Activated naive CD4-positive, alpha-beta T cell treated with anti-CD3 and anti-CD28 coated beads for 36 hours (primary cell): ENCODE measurements at regions of chrX and their contacts with region 1.

Region 1: DNA sequence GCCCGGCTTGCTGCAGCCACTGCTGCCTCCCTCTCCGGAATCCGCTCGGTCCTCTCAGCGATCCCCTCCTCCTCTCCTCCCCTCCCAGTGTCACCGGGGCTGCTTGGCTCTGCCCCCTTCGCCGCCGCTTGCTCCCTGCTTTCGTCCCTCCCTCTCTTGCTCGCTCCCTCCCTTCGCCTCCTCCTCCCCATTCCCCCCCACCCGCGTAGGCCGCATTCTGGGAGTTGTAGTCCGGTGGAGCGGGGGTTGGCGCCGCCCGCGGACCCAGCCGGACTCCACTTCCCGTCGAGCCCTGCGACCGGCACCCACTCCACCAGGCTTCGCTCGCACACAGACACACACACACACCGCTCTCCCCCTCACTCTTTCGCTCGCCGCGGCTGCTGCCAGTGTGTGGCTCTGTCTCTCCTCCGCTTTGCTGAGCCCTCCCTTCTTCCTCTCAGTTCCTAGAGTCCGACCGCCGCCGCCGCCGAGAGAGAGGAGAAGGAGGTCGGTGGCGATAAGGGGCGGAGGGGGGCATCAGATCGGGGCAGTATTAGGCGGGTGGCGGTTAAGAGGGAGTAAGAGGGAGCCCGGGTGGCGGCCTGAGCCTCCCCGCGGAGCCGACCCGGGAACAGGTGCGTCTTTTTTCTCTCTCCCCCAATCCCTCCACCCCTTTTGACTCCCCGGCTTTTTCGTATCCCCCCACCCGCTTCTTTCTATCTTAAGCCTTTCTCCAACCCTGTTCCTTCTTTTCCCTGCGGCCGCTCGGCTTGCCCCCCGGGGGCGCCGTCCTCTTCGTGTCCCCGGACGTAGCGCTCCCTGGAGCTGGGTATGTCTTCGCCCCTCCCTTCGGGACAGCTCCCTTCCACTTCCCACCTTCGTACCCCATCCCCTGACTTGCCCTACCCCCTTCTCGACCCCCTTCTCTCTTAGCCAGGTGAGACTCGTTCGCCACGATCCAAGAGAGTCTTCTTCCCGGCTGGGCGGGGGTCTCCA is at the start of gene BCORL1:
- DNase-seq: peak; percentile 90
- H3K4me3 Mint-ChIP-seq: no peak within 1 kb of the TSS
- H3K27ac Mint-ChIP-seq: no peak within 1 kb of the TSS
- H3K4me1 Mint-ChIP-seq: peaks cover 16% of the 10 kb centered on the region
- H3K27me3 Mint-ChIP-seq: no peaks in the 10 kb centered on the region
- total RNA-seq, gene BCORL1: 3.6 to 4.1 TPM

Region 2: DNA sequence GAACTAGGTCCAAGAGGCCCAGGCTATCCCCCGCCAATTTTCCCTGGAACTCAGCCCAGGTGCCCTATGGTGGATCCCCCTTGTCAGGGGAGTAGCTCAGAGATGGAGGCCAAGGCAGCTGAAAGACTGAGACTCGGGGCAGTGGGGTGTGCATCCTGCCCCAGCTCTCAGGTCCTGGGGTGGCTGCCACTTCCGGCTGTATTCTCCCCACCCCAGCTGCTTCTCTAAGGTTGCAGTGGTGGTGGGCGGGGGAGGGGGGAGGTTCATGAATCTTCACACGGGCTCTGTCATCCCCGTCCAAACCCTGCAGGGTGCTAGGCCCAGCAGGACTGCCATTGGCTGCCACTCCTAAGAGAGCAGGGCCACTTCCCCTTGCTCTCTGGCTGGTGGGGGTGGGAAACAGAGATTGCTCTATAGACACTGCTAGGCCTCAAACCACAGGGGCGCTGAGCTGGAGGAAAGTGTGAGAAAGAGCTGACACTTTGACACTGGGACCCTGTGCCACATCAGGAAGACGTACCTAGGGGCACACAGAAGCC is 201.4 kb before region 1 on chrX:
- CTCF ChIA-PET with region 1: no interaction called
- intact Hi-C with region 1: loop called (anchors 2 kb)
- DNase-seq: peak; percentile 91
- H3K4me3 Mint-ChIP-seq: peak overlapping the region; percentile 82
- H3K27ac Mint-ChIP-seq: peak overlapping the region; percentile 97
- H3K4me1 Mint-ChIP-seq: peaks cover 53% of the 10 kb centered on the region
- H3K27me3 Mint-ChIP-seq: no peaks in the 10 kb centered on the region

Region 3: DNA sequence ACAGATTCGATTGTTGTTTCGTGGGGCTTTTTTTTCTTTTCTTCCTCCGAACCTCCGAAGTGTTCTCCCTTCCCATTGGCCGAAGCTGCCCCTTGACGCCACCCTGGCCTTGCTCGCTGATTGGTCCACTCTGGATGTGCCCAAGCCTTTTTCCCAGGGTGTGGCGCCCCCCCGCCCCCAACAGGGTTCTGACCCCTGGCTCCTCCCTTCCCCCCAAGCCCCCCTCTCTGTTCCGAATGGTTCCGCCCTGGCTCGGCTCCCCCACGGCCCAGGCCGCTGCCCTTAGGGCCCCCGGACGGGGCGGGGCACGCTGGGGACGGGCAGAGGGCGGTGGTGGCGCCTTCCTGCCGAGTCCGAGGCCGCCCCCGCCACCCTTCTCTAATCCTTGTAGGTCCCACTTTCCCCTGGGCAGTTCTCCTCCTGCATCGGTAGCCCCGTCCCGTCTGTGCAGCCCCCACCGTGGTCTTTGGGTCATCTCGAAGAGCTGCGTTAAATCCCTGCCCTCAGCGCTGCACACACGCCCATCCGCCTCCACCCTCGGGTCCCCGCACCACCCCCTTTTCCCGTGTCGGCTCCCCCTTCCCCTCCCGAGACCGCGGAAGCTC is 51.0 kb before region 1 on chrX:
- CTCF ChIA-PET with region 1: no interaction called
- intact Hi-C with region 1: loop called (anchors 1 kb)
- DNase-seq: peak; percentile 43
- H3K4me3 Mint-ChIP-seq: peak overlapping the region; percentile 65
- H3K27ac Mint-ChIP-seq: no peak overlapping the region
- H3K4me1 Mint-ChIP-seq: peaks cover 5% of the 10 kb centered on the region
- H3K27me3 Mint-ChIP-seq: peaks cover 4% of the 10 kb centered on the region

Region 4: GRCh38 chrX:130060122-130061069 is 77.8 kb after region 1 on chrX:
- CTCF ChIA-PET with region 1: interaction called, 6 read pairs
- intact Hi-C with region 1: loop called (anchors 2 kb)
- DNase-seq: peak; percentile 83
- H3K4me3 Mint-ChIP-seq: peak overlapping the region; percentile 71
- H3K27ac Mint-ChIP-seq: no peak overlapping the region
- H3K4me1 Mint-ChIP-seq: no peaks in the 10 kb centered on the region
- H3K27me3 Mint-ChIP-seq: no peaks in the 10 kb centered on the region

Region 5: GRCh38 chrX:130165703-130166502 is 183.3 kb after region 1 on chrX and contains the start of gene AIFM1:
- CTCF ChIA-PET with region 1: no interaction called
- intact Hi-C with region 1: loop called (anchors 1 kb)
- DNase-seq: peak; percentile 90
- H3K4me3 Mint-ChIP-seq: peak within 1 kb of the TSS; percentile 93
- H3K27ac Mint-ChIP-seq: peak within 1 kb of the TSS; percentile 92
- H3K4me1 Mint-ChIP-seq: peaks cover 35% of the 10 kb centered on the region
- H3K27me3 Mint-ChIP-seq: no peaks in the 10 kb centered on the region
- total RNA-seq, gene AIFM1: 59.4 to 63.1 TPM

Region 6: GRCh38 chrX:130296743-130297142 is 314.2 kb after region 1 on chrX:
- CTCF ChIA-PET with region 1: no interaction called
- intact Hi-C with region 1: no loop called
- DNase-seq: no peak
- H3K4me3 Mint-ChIP-seq: no peak overlapping the region
- H3K27ac Mint-ChIP-seq: no peak overlapping the region
- H3K4me1 Mint-ChIP-seq: no peaks in the 10 kb centered on the region
- H3K27me3 Mint-ChIP-seq: peaks cover 2% of the 10 kb centered on the region

Region 7: DNA sequence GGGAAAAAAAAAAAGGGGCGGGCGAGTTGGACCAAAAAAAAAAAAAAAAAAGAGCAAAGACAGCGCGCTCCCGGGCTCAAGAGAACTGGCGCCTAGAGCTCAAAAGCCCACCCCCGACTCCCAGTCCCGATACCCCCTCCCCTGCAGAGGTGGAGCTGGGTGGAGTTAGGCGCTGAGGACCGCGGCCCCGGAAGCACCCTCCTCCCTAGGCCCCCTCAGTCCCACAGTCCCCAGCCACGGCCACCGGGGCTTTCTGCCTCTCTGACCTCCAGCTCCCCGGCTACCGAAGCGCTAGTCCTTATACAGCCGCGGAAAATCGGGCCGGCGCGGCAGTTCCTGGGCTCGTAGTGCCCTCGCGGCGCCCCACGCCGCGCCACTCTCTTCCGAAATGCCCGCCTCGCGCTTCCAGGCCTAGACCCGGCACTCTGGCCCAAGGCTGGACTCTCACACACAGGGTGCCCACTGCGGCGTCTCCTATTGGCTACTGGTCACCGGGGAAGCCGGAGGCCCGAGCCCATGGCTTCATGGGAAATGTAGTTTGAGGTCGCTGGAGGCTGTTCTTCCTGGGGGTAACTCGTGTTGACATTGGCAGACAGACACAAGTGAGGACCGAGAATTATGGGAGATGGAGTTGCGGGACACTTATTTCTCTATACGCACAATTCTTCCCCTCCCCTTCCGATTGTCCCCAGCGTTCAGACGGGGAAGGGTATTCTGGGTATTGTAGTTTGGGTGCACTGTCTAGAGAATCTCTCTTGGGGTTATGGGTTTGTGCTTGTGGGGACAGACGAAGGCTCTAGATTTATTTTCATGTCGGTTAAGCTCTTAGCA is 920.4 kb after region 1 on chrX and contains the start of gene ENOX2:
- CTCF ChIA-PET with region 1: no interaction called
- intact Hi-C with region 1: loop called (anchors 10 kb)
- DNase-seq: peak; percentile 84
- H3K4me3 Mint-ChIP-seq: no peak within 1 kb of the TSS
- H3K27ac Mint-ChIP-seq: no peak within 1 kb of the TSS
- H3K4me1 Mint-ChIP-seq: peaks cover 9% of the 10 kb centered on the region
- H3K27me3 Mint-ChIP-seq: no peaks in the 10 kb centered on the region
- total RNA-seq, gene ENOX2: 8.7 to 9.7 TPM